PC-9 (cell line): ENCODE measurements at regions of chr2 and their contacts with region 1.

Region 1: DNA sequence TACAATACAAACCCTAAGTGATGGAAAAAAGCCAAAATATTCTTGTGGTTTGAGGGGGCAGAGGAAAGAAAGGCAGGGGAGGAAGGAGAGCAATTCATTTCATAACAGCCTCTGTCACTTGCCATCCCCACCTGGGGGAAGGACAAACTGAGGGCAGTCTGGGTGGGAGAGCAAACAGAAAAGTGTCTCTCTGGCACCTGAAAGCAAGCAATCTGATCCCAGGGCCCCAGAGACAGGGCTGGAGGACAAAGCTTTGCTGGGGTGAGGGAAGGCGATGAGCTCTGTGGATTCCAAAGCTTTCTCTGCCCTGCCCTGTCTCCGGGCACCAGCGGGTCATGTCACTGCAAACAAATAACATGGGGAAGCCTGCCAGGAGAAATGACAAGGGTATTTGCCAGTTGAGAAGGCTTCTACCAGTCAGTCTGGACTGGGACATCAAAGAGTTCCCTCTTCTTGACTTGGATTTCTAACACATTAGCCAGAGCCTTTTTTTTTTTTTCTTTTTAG is 528.1 kb upstream of the TNP1 start:
- DNase-seq: peak; percentile 90 to 92
- H3K4me3 ChIP-seq: no peak overlapping the region
- H3K27ac ChIP-seq: peak overlapping the region; percentile 43
- H3K4me1 ChIP-seq: peaks cover 30% of the 10 kb centered on the region
- H3K27me3 ChIP-seq: no peaks in the 10 kb centered on the region
- CTCF ChIP-seq: no peak

Region 2: DNA sequence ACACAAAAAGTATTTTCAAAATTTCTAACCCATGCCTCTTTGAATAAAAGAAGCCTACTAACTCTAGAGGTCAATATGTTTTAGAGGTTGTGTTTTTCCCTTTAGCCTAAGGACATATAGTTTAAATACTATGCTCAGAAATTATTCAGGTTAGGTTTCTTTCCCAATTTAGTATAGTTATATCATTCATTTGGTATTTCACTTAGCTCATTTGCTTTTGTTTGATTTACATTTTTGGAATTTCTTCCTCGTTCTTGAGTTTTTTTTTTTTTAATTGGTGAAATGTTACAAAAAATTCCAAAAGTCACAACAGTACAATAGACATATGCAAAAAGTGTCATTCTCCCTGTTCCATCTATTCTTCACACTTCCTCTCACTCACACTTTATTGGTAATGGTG is 156.8 kb before region 1 on chr2:
- CTCF ChIA-PET with region 1: no interaction called
- POLR2A ChIA-PET with region 1: no interaction called
- intact Hi-C with region 1: loop called (anchors 5 kb)
- DNase-seq: peak in 1 of 2 experiments; percentile 88
- H3K4me3 ChIP-seq: no peak overlapping the region
- H3K27ac ChIP-seq: peak overlapping the region; percentile 70
- H3K4me1 ChIP-seq: peaks cover 33% of the 10 kb centered on the region
- H3K27me3 ChIP-seq: no peaks in the 10 kb centered on the region
- CTCF ChIP-seq: no peak

Region 3: GRCh38 chr2:217289877-217290279 is 98.1 kb before region 1 on chr2:
- CTCF ChIA-PET with region 1: no interaction called
- POLR2A ChIA-PET with region 1: no interaction called
- intact Hi-C with region 1: loop called (anchors 2 kb)
- DNase-seq: peak; percentile 45 to 89
- H3K4me3 ChIP-seq: no peak overlapping the region
- H3K27ac ChIP-seq: peak overlapping the region; percentile 25
- H3K4me1 ChIP-seq: peaks cover 40% of the 10 kb centered on the region
- H3K27me3 ChIP-seq: no peaks in the 10 kb centered on the region
- CTCF ChIP-seq: no peak

Region 4: DNA sequence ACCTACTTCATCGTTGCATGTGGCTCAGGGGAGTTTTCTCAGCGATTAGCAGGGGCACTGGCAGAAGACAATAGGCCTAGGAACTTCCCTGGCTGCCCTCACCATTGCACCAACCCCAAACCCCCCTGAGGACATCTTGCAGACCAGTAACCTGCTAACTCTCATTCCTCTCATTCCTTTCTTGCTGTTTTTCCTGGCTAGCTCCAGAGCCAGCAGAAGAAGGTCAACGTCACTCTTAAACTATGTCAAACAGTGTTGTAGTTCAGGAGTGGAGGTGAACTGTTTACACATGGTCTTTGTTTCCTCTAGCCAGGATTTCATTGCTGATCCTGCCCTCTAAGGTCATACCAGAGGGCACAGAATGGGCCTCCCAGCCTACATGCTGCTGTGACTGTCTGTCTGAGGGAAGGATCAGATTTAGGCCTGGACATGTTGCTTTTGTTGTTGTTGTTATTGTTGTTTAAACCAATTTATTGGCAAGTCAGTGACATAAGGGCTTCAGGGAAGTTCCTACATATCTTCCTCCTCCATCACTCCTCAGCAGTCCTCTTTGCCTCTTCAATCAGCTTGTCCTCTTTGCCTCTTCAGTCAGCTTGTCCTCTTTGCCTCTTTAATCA is 56.3 kb before region 1 on chr2:
- CTCF ChIA-PET with region 1: no interaction called
- POLR2A ChIA-PET with region 1: interaction called, 18 read pairs
- intact Hi-C with region 1: loop called (anchors 1 kb)
- DNase-seq: peak; percentile 88 to 99
- H3K4me3 ChIP-seq: no peak overlapping the region
- H3K27ac ChIP-seq: peak overlapping the region; percentile 79
- H3K4me1 ChIP-seq: peaks cover 90% of the 10 kb centered on the region
- H3K27me3 ChIP-seq: no peaks in the 10 kb centered on the region
- CTCF ChIP-seq: no peak

Region 5: GRCh38 chr2:217356781-217357180 is 31.2 kb before region 1 on chr2:
- CTCF ChIA-PET with region 1: no interaction called
- POLR2A ChIA-PET with region 1: no interaction called
- intact Hi-C with region 1: no loop called
- DNase-seq: no peak
- H3K4me3 ChIP-seq: no peak overlapping the region
- H3K27ac ChIP-seq: no peak overlapping the region
- H3K4me1 ChIP-seq: peaks cover 30% of the 10 kb centered on the region
- H3K27me3 ChIP-seq: no peaks in the 10 kb centered on the region
- CTCF ChIP-seq: no peak

Region 6: GRCh38 chr2:217370391-217370790 is 17.6 kb before region 1 on chr2:
- CTCF ChIA-PET with region 1: interaction called, 3 read pairs
- POLR2A ChIA-PET with region 1: no interaction called
- intact Hi-C with region 1: loop called (anchors 2 kb)
- DNase-seq: peak; percentile 32 to 79
- H3K4me3 ChIP-seq: no peak overlapping the region
- H3K27ac ChIP-seq: no peak overlapping the region
- H3K4me1 ChIP-seq: peaks cover 53% of the 10 kb centered on the region
- H3K27me3 ChIP-seq: no peaks in the 10 kb centered on the region
- CTCF ChIP-seq: no peak